ENCODE measurements at regions of chr15 and their contacts with region 1.

Region 1: DNA sequence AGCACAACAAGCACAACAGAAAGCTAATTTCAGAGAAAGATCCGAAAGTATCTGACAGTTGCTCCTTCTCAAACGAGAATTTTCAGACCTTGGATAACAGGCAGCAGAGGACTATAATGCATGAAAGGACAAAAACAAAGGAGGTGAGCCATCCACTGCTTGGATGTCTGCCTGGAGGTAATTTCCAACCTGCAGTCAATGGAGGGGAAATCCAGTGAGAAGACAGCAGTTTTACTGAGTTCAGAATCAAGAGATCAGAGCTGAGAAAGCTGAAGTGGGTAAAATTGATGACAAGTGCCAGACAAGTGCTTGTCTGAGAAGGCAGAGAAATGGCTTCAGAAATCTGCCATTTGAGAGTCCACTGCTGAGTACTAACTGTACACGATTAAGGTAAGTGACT is 22.1 kb downstream of the UBE3A start:
- DNase-seq: no peak
- ATAC-seq: no peak

Region 2: DNA sequence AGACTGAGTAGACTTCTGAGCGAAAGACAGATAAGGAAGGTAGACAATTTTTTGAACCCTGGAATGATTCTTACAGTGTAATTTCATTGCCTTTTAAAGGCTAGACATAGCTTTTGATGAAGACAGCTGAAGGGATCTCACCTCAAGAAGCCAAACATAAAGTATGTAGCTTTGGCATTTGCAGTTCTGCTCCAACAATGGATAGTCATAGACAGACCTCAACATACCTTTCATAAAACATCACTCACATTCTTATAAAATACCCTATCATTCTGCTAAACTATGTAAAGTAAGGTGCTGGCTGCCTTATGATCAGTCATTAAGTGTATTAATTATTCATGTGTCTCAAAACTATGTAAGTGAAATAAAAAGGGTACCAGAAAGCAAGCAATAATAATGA is 47.8 kb before region 1 on chr15:
- intact Hi-C with region 1: loop called (anchors 10 kb)
- DNase-seq: no peak
- ATAC-seq: no peak

Region 3: GRCh38 chr15:25391971-25392721 is 24.5 kb before region 1 on chr15:
- intact Hi-C with region 1: no loop called
- DNase-seq: no peak
- ATAC-seq: peak; percentile 81

Region 4: DNA sequence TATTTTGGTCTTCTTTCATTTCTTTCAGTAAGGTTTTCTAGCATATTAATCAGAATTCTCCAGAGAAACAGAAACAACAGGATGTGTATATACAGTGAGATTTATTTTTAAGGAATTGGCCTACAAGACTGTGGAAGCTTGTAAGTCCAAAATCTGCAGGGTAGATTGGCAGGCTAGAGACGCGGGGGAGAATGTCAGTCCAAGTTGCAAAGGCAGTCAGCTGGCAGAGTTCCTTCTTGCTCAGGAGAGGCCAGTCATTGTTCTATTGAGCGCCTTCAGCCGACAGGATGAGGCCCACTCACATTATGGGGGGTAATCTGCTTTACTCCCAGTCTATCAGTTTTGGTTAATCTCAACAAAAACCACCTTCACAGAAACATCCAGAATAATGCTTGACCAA is 155.5 kb after region 1 on chr15:
- intact Hi-C with region 1: no loop called
- DNase-seq: no peak
- ATAC-seq: no peak

Measured in left ventricle myocardium superior (tissue), 1 donor.